ENCODE measurements at regions of chr5 and their contacts with region 1.

Region 1: DNA sequence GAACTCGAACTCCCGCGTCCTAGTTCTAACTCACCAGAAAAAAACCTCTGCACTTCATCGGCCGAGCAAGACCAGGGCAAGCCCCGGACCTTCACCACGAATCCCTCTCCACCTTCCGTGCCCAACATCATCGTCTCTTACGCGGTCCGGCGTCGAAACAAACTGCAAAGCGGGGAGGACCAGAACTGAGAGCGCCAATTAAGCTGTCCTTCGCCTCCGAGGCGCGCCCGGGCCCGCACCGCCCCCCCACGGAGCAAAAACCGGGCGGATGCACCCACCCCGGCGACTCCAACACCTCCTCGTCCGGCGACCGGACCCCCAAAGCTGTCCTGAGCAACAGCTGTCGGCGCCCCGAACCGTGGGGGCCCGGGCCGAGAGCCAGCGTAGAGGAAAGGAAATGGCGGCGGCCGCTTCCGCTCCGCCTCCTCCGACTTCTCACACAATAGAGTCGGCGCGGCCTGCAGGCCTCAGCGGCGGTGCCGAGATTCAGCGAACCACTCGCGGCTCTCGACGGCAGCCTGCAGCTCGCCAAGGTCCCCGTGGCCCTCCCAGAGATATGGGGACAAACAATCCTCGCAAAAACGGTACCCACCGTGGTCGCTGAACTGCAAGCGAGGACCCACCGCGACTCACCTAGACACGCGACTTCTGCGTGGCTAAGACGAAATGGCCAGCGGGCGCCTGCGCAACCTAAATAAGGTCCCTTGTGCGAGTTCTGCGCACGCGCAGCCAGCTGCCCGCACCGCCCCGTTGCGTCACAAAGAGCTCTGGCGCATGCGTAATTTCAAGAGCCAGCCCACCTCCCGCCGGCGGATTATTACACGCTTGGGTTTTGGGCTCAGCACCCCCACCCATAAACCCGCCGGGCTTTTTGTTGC is at the start of gene HNRNPH1:
- DNase-seq: peak; percentile 98
- H3K4me3 Mint-ChIP-seq: peak within 1 kb of the TSS; percentile 98
- H3K27ac Mint-ChIP-seq: peak within 1 kb of the TSS; percentile 99
- H3K4me1 Mint-ChIP-seq: peaks cover 38% of the 10 kb centered on the region
- H3K27me3 Mint-ChIP-seq: no peaks in the 10 kb centered on the region
- total RNA-seq, gene HNRNPH1: 1,015 and 1,039 TPM in 2 replicates

Region 2: GRCh38 chr5:178626484-178627258 is 996.6 kb before region 1 on chr5 and contains the start of gene CLK4:
- intact Hi-C with region 1: loop called (anchors 5 kb)
- DNase-seq: peak; percentile 94
- H3K4me3 Mint-ChIP-seq: peak within 1 kb of the TSS; percentile 97
- H3K27ac Mint-ChIP-seq: peak within 1 kb of the TSS; percentile 98
- H3K4me1 Mint-ChIP-seq: peaks cover 19% of the 10 kb centered on the region
- H3K27me3 Mint-ChIP-seq: peaks cover 6% of the 10 kb centered on the region
- total RNA-seq, gene CLK4: 21.9 and 23.6 TPM in 2 replicates

Region 3: DNA sequence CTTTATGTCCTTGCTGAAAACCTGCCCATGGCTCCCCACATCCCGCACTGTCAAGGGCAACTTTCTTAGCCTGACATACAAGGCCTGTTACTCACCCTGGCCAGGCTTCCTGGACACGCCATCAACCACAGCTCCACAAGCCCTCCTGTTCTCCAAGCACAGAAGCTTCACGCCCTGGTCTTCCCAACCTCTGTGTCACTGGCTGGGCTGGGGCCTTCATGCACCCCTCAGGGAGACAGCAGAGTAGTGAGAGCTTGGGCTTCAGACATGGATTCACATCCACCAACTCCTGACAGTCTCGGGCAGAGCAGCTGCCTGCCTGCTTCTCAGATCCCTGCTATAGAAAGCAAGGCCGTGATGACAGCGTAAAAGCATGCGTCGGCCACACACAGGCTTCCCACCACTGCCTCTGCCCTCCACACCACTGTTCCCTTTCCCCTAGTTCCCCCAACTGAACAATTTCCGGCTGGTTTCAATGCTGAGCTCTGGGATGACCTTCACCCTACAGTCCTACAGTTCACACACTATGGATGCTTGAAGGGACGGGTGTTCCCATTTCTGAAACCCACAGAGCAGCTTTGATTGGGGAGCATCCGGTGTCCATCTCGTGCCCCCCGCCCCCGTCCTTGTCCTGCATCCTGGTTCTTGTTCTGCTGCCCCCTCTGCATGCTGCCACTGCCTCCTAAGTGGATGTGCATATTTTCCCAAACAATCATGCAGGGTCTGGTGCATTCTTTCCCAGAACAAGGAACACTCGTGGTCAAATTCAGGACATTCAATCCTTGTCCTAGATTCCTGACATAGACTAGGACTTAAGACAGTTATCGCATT is 244.6 kb before region 1 on chr5:
- intact Hi-C with region 1: no loop called
- DNase-seq: no peak
- H3K4me3 Mint-ChIP-seq: no peak overlapping the region
- H3K27ac Mint-ChIP-seq: no peak overlapping the region
- H3K4me1 Mint-ChIP-seq: no peaks in the 10 kb centered on the region
- H3K27me3 Mint-ChIP-seq: no peaks in the 10 kb centered on the region

Region 4: GRCh38 chr5:179559284-179560252 is 63.7 kb before region 1 on chr5:
- intact Hi-C with region 1: loop called (anchors 1 kb)
- DNase-seq: peak; percentile 92
- H3K4me3 Mint-ChIP-seq: peak overlapping the region; percentile 90
- H3K27ac Mint-ChIP-seq: peak overlapping the region; percentile 77
- H3K4me1 Mint-ChIP-seq: peaks cover 20% of the 10 kb centered on the region
- H3K27me3 Mint-ChIP-seq: no peaks in the 10 kb centered on the region

Region 5: DNA sequence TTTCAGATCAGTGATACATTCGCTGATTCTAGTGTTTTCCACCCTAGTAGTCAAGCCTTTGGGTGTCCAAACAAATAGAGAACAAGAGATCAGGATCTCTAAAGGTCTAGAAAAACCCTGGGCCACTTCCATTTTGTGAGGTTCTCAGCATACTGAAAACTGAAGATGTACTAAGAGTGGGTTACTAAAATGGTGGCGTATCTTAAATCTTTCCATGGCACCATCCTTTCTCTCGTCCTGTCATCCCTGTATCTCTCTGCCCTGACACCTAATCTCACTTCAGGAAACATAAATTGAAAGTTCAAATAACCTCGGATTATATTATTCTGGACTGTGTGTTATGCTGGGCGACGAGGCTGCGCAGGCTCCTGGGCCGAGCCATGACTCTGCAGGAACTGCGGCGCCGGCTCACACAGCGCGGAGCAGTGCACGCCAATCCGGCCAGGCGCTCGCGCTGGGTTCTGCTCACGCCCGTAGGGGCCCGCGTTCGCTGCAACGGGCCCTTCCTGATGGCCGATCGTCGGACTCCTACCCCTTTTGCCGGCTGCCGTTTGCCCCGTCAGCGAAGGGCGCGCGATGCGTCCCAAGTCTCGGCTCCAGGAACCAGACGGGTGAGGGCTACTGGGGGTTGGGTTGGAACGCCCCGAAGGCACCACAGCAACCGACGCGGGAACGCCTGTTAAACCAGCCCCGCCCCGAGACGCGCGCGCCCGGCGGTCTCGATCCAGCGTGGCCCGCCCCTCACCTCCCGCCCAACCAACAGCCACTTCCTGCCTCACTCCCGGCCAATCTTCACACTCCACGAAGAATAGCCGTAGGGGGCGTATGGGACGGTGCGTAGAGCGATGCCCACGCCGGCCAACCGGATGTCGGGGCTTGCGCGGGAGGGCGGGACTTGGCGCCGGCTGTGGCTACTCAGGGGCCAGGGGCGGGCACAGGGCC is 75.0 kb after region 1 on chr5:
- intact Hi-C with region 1: loop called (anchors 1 kb)
- DNase-seq: peak; percentile 99
- H3K4me3 Mint-ChIP-seq: peak overlapping the region; percentile 99
- H3K27ac Mint-ChIP-seq: peak overlapping the region; percentile 100
- H3K4me1 Mint-ChIP-seq: peaks cover 28% of the 10 kb centered on the region
- H3K27me3 Mint-ChIP-seq: no peaks in the 10 kb centered on the region

Region 6: GRCh38 chr5:179738742-179739141 is 115.5 kb after region 1 on chr5:
- intact Hi-C with region 1: no loop called
- DNase-seq: no peak
- H3K4me3 Mint-ChIP-seq: no peak overlapping the region
- H3K27ac Mint-ChIP-seq: no peak overlapping the region
- H3K4me1 Mint-ChIP-seq: peaks cover 30% of the 10 kb centered on the region
- H3K27me3 Mint-ChIP-seq: no peaks in the 10 kb centered on the region

Region 7: GRCh38 chr5:179806250-179807222 is 183.3 kb after region 1 on chr5 and contains the start of gene MGAT4B:
- intact Hi-C with region 1: loop called (anchors 5 kb)
- DNase-seq: peak; percentile 65
- H3K4me3 Mint-ChIP-seq: peak within 1 kb of the TSS; percentile 77
- H3K27ac Mint-ChIP-seq: peak within 1 kb of the TSS; percentile 72
- H3K4me1 Mint-ChIP-seq: peaks cover 30% of the 10 kb centered on the region
- H3K27me3 Mint-ChIP-seq: no peaks in the 10 kb centered on the region
- total RNA-seq, gene MGAT4B: 135 and 139 TPM in 2 replicates

Region 8: DNA sequence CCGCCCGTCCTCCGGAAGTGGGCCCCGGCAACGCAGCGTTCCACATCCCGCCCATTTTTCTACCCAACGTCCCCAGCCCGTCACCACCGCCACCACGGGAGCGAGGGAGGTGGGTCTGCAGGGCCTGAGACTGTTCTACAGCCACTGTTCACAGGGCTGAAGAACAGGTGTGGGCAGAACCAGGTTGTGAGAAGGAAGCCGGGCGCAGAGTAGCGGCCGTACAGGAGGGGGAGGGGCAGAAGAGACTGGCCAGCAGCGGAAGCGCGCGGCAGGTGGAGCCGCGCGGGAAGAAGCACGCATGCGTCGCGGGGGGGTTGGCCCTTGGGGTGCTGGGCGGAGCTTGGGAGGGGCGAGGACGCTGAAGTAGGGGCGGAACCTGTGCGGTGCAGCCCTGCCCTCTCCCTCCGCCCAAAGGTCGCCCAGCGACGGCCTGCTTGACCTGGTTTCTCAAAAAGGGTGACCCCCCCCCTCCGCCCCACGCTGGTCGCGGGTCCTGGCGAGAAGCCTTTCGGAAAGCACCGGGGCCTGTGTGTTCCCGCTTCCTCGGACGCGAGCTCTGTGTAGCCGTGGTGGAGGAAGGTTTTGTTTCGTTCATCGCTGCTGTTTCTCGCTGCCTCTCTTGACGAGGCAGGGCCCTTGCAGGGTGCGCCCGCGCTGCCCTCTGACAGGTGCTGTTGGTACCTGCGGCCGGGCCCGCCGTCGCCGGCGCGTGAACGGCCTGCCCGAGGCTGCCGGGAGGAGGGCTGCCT is 1187.1 kb after region 1 on chr5:
- intact Hi-C with region 1: loop called (anchors 5 kb)
- DNase-seq: peak; percentile 92
- H3K4me3 Mint-ChIP-seq: peak overlapping the region; percentile 79
- H3K27ac Mint-ChIP-seq: peak overlapping the region; percentile 99
- H3K4me1 Mint-ChIP-seq: peaks cover 69% of the 10 kb centered on the region
- H3K27me3 Mint-ChIP-seq: no peaks in the 10 kb centered on the region

Measured in activated T-helper 2 cell treated with anti-CD3 and anti-CD28 coated beads, Interferon-gamma antibody, Interleukin-2, Interleukin-4, amounts not matched to agents 10 μg/mL and 5 μg/mL and 100 μg/mL, durations not matched to agents 14 hours and 24 hours and 36 hours (primary cell).